ENCODE measurements at regions of chr16 and their contacts with region 1.

Region 1: GRCh38 chr16:75555707-75556430 is at the start of gene TMEM231:
- DNase-seq: peak; percentile 94
- H3K4me3 Mint-ChIP-seq: peak within 1 kb of the TSS; percentile 85
- H3K27ac Mint-ChIP-seq: peak within 1 kb of the TSS; percentile 91
- H3K4me1 Mint-ChIP-seq: peaks cover 6% of the 10 kb centered on the region
- H3K27me3 Mint-ChIP-seq: no peaks in the 10 kb centered on the region
- CTCF ChIP-seq: no peak
- total RNA-seq, gene TMEM231: 18.6 and 21.1 TPM in 2 replicates

Region 2: GRCh38 chr16:75402821-75403475 is 152.9 kb before region 1 on chr16:
- CTCF ChIA-PET with region 1: no interaction called
- POLR2A ChIA-PET with region 1: no interaction called
- intact Hi-C with region 1: no loop called
- DNase-seq: peak; percentile 47
- H3K4me3 Mint-ChIP-seq: no peak overlapping the region
- H3K27ac Mint-ChIP-seq: no peak overlapping the region
- H3K4me1 Mint-ChIP-seq: peaks cover 5% of the 10 kb centered on the region
- H3K27me3 Mint-ChIP-seq: no peaks in the 10 kb centered on the region
- CTCF ChIP-seq: peak; percentile 56

Region 3: GRCh38 chr16:75432828-75433731 is 122.8 kb before region 1 on chr16 and contains the start of gene CFDP1:
- CTCF ChIA-PET with region 1: no interaction called
- POLR2A ChIA-PET with region 1: interaction called, 20 read pairs
- intact Hi-C with region 1: no loop called
- DNase-seq: peak; percentile 95
- H3K4me3 Mint-ChIP-seq: peak within 1 kb of the TSS; percentile 77
- H3K27ac Mint-ChIP-seq: peak within 1 kb of the TSS; percentile 86
- H3K4me1 Mint-ChIP-seq: peaks cover 13% of the 10 kb centered on the region
- H3K27me3 Mint-ChIP-seq: no peaks in the 10 kb centered on the region
- CTCF ChIP-seq: no peak
- total RNA-seq, gene CFDP1: 41.3 and 44.7 TPM in 2 replicates

Region 4: DNA sequence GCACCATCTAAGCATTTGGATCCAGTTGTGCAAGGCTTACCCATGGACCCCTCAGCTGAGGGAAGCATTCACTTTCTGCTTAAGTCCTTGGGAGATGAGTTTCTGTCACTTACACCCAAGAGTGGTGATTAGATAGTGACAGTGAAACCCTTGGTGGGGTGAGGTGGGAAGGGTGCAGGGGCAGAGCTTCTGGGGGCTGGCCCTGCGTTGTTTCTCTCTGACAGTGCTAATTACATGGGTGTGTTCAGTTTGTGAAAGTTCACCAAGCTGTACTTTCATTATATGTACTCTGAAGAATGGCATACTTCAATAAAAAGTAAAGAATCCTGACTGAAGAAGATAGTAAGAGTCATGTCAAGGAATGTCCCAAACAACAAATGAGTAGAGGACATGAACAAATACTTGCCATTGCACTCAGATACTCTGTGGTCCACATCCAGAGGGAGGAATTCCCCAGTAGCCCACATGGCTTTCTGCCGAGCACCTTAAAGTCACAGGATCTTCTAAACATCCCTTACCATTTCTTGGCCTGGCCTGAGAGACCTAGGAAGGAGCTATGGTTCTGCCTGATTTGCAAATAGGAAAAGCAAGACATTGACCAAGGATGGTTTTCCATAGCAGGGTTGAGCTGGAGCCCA is 69.1 kb before region 1 on chr16:
- CTCF ChIA-PET with region 1: interaction called, 7 read pairs
- POLR2A ChIA-PET with region 1: interaction called, 17 read pairs
- intact Hi-C with region 1: no loop called
- DNase-seq: no peak
- H3K4me3 Mint-ChIP-seq: no peak overlapping the region
- H3K27ac Mint-ChIP-seq: peak overlapping the region; percentile 70
- H3K4me1 Mint-ChIP-seq: peaks cover 36% of the 10 kb centered on the region
- H3K27me3 Mint-ChIP-seq: no peaks in the 10 kb centered on the region
- CTCF ChIP-seq: no peak

Region 5: DNA sequence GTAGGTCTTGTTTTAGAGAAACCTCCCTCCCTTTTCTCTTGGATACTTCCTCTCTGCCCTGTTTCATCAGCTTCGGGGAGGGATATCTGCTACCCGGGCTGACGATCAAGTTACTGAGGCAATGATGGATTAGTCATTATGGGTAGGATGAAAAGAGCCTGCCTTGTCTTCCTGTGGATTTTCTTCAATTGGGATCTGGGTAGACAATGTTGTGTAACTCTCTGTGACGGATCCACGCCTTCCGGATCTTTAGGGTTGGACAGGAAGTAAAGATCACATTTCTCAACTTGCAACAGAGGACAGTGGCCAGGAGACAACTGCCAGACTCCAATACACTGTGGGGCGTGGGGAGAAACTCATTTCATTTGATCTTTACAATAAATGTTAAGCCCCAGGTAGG is 49.3 kb before region 1 on chr16:
- CTCF ChIA-PET with region 1: interaction called, 9 read pairs
- POLR2A ChIA-PET with region 1: no interaction called
- intact Hi-C with region 1: loop called (anchors 1 kb)
- DNase-seq: peak; percentile 98
- H3K4me3 Mint-ChIP-seq: peak overlapping the region; percentile 42
- H3K27ac Mint-ChIP-seq: peak overlapping the region; percentile 95
- H3K4me1 Mint-ChIP-seq: peaks cover 34% of the 10 kb centered on the region
- H3K27me3 Mint-ChIP-seq: no peaks in the 10 kb centered on the region
- CTCF ChIP-seq: no peak

Region 6: DNA sequence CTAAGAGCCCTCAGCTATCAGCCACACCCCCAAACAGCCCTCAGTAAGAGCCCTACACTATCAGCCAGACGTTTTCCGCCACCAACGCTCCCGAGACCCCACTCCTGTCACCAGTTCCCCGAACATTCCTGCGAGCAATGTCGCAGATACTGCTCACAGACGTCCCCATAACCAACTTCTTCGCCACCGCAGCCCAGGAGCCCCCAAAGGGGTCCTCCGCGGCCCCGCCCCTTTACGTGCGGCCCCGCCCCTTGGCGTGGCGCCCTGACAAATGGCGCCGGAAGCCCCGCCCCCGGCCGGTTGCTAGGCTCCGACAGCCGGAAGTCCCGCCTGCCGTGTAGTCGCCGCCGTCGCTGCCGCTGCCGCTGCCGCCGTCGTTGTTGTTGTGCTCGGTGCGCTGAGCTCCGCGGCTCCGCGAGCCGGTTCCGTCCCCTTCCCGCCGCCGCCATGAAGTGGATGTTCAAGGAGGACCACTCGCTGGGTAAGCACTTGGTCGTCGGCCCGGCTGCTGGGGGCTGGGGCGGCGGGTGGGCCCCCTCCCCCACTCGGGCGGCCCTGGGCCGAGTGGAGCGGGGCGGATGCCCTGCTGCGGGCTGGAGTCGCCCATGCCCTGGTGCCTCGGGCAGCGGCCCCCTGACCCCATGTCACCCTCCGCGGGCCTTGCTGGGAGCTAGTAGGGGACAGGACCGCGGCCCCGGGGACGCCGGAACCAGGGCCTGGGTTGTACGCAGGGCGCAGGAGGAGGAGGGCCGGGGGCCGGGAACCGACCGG is 10.4 kb after region 1 on chr16 and contains the start of gene GABARAPL2:
- CTCF ChIA-PET with region 1: interaction called, 6 read pairs
- POLR2A ChIA-PET with region 1: interaction called, 116 read pairs
- intact Hi-C with region 1: no loop called
- DNase-seq: peak; percentile 77
- H3K4me3 Mint-ChIP-seq: peak within 1 kb of the TSS; percentile 83
- H3K27ac Mint-ChIP-seq: peak within 1 kb of the TSS; percentile 80
- H3K4me1 Mint-ChIP-seq: peaks cover 7% of the 10 kb centered on the region
- H3K27me3 Mint-ChIP-seq: peaks cover 13% of the 10 kb centered on the region
- CTCF ChIP-seq: no peak
- total RNA-seq, gene GABARAPL2: 61.5 and 70.5 TPM in 2 replicates

Region 7: DNA sequence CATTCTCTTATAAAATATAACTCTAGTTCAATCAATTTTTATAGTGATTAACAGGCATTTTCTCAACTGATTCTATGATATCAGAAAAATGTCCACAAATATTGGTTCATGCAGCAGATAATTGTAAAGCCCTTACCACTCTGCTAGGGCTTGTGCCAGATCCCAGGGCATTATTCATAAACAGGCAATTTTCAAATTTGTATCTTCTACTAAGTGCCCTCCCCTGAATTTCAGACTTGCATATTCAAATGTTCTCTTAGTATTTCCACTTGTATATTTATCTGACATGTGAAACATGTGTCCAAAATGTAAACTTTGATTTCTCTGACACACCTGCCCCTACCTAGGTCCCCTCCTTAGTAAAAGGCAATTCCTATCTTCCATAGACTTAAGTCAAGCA is 111.6 kb after region 1 on chr16:
- CTCF ChIA-PET with region 1: no interaction called
- POLR2A ChIA-PET with region 1: no interaction called
- intact Hi-C with region 1: no loop called
- DNase-seq: no peak
- H3K4me3 Mint-ChIP-seq: no peak overlapping the region
- H3K27ac Mint-ChIP-seq: no peak overlapping the region
- H3K4me1 Mint-ChIP-seq: no peaks in the 10 kb centered on the region
- H3K27me3 Mint-ChIP-seq: no peaks in the 10 kb centered on the region
- CTCF ChIP-seq: no peak